ENCODE measurements at regions of chr16 and their contacts with region 1.

Region 1: GRCh38 chr16:81366316-81366932 is 51.7 kb downstream of the GAN start:
- DNase-seq: peak; percentile 42
- H3K4me3 ChIP-seq: no peak overlapping the region
- H3K27ac ChIP-seq: no peak overlapping the region
- H3K4me1 ChIP-seq: peaks cover 3% of the 10 kb centered on the region
- H3K27me3 ChIP-seq: no peaks in the 10 kb centered on the region
- CTCF ChIP-seq: peak; percentile 53 to 57

Region 2: GRCh38 chr16:81444448-81445121 is 78.2 kb after region 1 on chr16 and contains the start of gene CMIP:
- CTCF ChIA-PET with region 1: no interaction called
- dilution Hi-C with region 1: no loop called
- in situ Hi-C with region 1: no loop called
- intact Hi-C with region 1: loop called (anchors 10 kb)
- DNase-seq: peak; percentile 74
- H3K4me3 ChIP-seq: peak within 1 kb of the TSS; percentile 69 to 94 (median 72)
- H3K27ac ChIP-seq: peak within 1 kb of the TSS; percentile 93
- H3K4me1 ChIP-seq: peaks cover 26% of the 10 kb centered on the region
- H3K27me3 ChIP-seq: no peaks in the 10 kb centered on the region
- CTCF ChIP-seq: no peak
- total RNA-seq, gene CMIP: 44.5 to 98.5 TPM

Region 3: GRCh38 chr16:81466356-81466980 is 100.0 kb after region 1 on chr16:
- CTCF ChIA-PET with region 1: no interaction called
- dilution Hi-C with region 1: no loop called
- in situ Hi-C with region 1: no loop called
- intact Hi-C with region 1: no loop called
- DNase-seq: no peak
- H3K4me3 ChIP-seq: no peak overlapping the region
- H3K27ac ChIP-seq: no peak overlapping the region
- H3K4me1 ChIP-seq: no peaks in the 10 kb centered on the region
- H3K27me3 ChIP-seq: no peaks in the 10 kb centered on the region
- CTCF ChIP-seq: no peak

Region 4: GRCh38 chr16:81696961-81697615 is 330.7 kb after region 1 on chr16:
- CTCF ChIA-PET with region 1: no interaction called
- dilution Hi-C with region 1: no loop called
- in situ Hi-C with region 1: no loop called
- intact Hi-C with region 1: loop called (anchors 1 kb)
- DNase-seq: peak; percentile 48
- H3K4me3 ChIP-seq: no peak overlapping the region
- H3K27ac ChIP-seq: no peak overlapping the region
- H3K4me1 ChIP-seq: peaks cover 40% of the 10 kb centered on the region
- H3K27me3 ChIP-seq: no peaks in the 10 kb centered on the region
- CTCF ChIP-seq: peak; percentile 76 to 80

Region 5: DNA sequence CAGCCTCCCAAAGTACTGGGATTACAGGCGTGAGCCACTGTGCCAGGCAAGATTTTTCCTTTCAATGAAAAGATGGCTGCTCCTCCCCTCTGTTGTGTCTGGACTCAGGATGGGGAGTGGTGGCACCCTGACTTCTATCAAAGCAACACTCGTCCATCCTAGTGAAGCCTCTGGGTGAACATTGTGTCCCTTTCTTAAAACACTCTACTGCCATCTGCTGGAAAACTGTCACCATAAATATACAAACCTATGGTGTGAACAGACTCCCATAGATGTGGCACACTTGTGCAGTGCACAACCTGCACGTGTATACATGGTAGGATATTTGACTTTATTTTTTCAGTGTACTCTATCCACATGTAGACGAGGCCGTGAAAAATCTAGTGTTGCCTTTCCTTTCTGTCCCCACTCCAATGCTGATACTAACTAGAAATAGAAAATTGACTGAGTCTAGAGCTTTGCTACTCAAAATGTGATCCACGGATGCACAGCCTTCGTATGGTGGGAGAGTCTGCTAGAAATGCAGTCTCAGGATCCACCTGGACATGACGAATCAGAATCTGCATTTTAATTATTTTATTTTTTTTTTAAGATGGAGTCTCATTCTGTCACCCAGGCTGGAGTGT is 356.8 kb after region 1 on chr16:
- CTCF ChIA-PET with region 1: no interaction called
- dilution Hi-C with region 1: no loop called
- in situ Hi-C with region 1: loop called (anchors 10 kb)
- intact Hi-C with region 1: loop called (anchors 1 kb)
- DNase-seq: peak; percentile 73
- H3K4me3 ChIP-seq: no peak overlapping the region
- H3K27ac ChIP-seq: no peak overlapping the region
- H3K4me1 ChIP-seq: peaks cover 8% of the 10 kb centered on the region
- H3K27me3 ChIP-seq: no peaks in the 10 kb centered on the region
- CTCF ChIP-seq: peak; percentile 50 to 66

Region 6: GRCh38 chr16:81737885-81738786 is 371.7 kb after region 1 on chr16:
- CTCF ChIA-PET with region 1: no interaction called
- dilution Hi-C with region 1: no loop called
- in situ Hi-C with region 1: no loop called
- intact Hi-C with region 1: loop called (anchors 1 kb)
- DNase-seq: peak; percentile 88
- H3K4me3 ChIP-seq: peak overlapping the region in 1 of 3 experiments; percentile 18
- H3K27ac ChIP-seq: no peak overlapping the region
- H3K4me1 ChIP-seq: peaks cover 3% of the 10 kb centered on the region
- H3K27me3 ChIP-seq: no peaks in the 10 kb centered on the region
- CTCF ChIP-seq: peak; percentile 81 to 83

Region 7: DNA sequence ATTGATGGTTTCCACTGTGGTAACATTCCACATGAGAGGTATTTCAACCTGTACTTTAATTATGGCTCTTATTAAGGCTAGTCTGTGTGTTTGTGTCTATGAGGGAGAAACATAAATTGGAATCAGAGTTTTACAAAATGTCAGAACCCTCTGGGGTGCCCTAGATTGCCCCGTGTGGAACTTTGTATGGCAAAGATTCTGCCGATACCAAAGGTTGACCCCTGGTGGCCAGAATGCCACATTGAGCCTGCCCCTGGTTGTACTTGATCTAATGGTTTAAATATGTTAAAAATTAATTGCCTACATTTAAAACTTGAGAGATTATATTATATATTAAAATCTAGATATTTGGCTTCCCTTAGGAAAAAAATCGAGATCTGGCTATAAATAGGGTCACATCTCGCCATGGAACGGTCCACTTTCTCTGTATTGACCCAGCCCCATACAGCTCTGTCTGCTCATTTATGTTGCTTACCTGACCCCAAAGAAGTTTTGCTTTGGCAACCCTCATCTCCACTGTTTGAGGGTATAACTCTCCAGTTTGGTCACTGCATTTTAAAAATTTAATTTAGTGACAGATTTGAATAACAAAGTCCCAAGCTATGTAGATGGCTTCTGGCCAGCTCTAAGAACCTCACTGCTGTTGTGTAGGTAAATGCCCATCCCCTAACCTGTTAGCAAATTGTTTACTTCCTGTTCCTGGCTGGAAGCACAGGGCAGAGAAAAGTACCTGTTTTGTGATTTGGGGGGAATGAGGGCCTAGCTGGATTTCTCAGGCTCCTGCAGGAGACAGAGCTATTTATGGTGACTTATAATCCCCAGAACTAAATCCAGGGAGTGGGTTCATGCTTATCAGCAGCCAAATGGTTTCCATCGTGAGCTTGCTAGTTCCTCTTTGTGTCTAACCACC is 507.7 kb after region 1 on chr16:
- CTCF ChIA-PET with region 1: no interaction called
- dilution Hi-C with region 1: no loop called
- in situ Hi-C with region 1: no loop called
- intact Hi-C with region 1: loop called (anchors 10 kb)
- DNase-seq: peak; percentile 27
- H3K4me3 ChIP-seq: no peak overlapping the region
- H3K27ac ChIP-seq: no peak overlapping the region
- H3K4me1 ChIP-seq: no peaks in the 10 kb centered on the region
- H3K27me3 ChIP-seq: no peaks in the 10 kb centered on the region
- CTCF ChIP-seq: peak; percentile 93 to 96